Left colon (tissue), 2 donors: ENCODE measurements at regions of chr20 and their contacts with region 1.

Region 1: GRCh38 chr20:32357869-32358631 is at the start of gene ASXL1:
- DNase-seq: peak; percentile 95 to 97
- ATAC-seq: peak; percentile 90
- total RNA-seq, gene ASXL1: 39.9 to 42.5 TPM

Region 2: GRCh38 chr20:32445539-32446273 is 87.7 kb after region 1 on chr20:
- intact Hi-C with region 1: loop called in 1 of 2 experiments (anchors 10 kb)
- DNase-seq: no peak
- ATAC-seq: peak; percentile 19

Region 3: GRCh38 chr20:32484958-32485769 is 127.1 kb after region 1 on chr20:
- intact Hi-C with region 1: loop called in 1 of 2 experiments (anchors 10 kb)
- DNase-seq: peak; percentile 76 to 89
- ATAC-seq: peak; percentile 42